ENCODE measurements at regions of chr19 and their contacts with region 1.

Region 1: GRCh38 chr19:34733826-34734600 is at the start of gene ZNF181:
- DNase-seq: peak; percentile 58 to 84 (median 82)
- ATAC-seq: peak; percentile 89
- H3K4me3 ChIP-seq: peak within 1 kb of the TSS; percentile 79
- H3K4me3 Mint-ChIP-seq: peak within 1 kb of the TSS; percentile 86 to 99 (median 98)
- H3K27ac ChIP-seq: peak within 1 kb of the TSS; percentile 94
- H3K27ac Mint-ChIP-seq: peak within 1 kb of the TSS; percentile 90 to 99 (median 98)
- H3K4me1 ChIP-seq: peaks cover 11 to 17% of the 10 kb centered on the region in 2 donors
- H3K4me1 Mint-ChIP-seq: peaks cover 18 to 39% (median 28%) of the 10 kb centered on the region in 7 donors
- H3K27me3 ChIP-seq: no peaks in the 10 kb centered on the region
- H3K27me3 Mint-ChIP-seq: peaks cover 0 to 4% (median 0%) of the 10 kb centered on the region in 5 donors
- total RNA-seq, gene ZNF181: 4.8 to 28.5 (median 8.4) TPM

Region 2: GRCh38 chr19:34677386-34678084 is 56.5 kb before region 1 on chr19 and contains the start of gene ZNF302:
- CTCF ChIA-PET with region 1: no interaction called
- POLR2A ChIA-PET with region 1: interaction called, 17 read pairs
- intact Hi-C with region 1: loop called (anchors 1 kb)
- DNase-seq: peak; percentile 87 to 96 (median 94)
- ATAC-seq: peak; percentile 95
- H3K4me3 ChIP-seq: peak within 1 kb of the TSS; percentile 93
- H3K4me3 Mint-ChIP-seq: peak within 1 kb of the TSS; percentile 92 to 99 (median 96)
- H3K27ac ChIP-seq: peak within 1 kb of the TSS; percentile 80
- H3K27ac Mint-ChIP-seq: peak within 1 kb of the TSS; percentile 94 to 100 (median 99)
- H3K4me1 ChIP-seq: peaks cover 14 to 15% of the 10 kb centered on the region in 2 donors
- H3K4me1 Mint-ChIP-seq: peaks cover 20 to 56% (median 35%) of the 10 kb centered on the region in 7 donors
- H3K27me3 ChIP-seq: no peaks in the 10 kb centered on the region
- H3K27me3 Mint-ChIP-seq: peaks cover 9 to 18% (median 12%) of the 10 kb centered on the region in 5 donors
- total RNA-seq, gene ZNF302: 13.6 to 61.4 (median 25.7) TPM

Region 3: DNA sequence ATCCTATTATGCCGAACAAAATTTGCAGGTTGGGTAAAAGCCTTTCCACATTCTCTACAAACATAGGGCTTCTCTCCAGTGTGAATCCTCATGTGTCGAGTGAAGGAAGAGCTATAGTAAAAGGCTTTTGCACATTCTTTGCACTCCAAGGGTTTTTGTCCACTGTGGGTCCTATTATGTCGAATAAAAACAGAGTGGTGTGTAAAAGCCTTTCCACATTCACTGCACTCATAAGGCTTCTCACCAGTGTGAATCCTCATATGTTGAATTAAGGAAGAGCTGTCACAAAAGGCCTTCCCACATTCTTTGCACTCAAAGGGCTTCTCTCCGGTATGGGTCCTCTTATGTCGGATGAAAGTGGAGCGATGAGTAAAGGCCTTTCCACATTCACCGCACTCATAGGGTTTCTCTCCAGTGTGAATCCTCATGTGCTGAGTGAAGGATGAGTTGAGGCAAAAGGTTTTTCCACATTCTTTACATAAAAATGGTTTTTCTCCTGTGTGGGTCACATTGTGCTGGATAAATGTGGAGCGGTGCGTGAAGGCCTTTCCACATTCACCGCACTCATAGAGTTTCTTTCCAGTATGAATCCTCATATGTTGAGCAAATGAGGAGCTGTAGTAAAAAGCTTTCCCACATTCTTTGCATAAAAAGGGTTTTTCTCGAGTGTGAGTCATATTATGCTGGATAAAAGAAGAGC is 25.4 kb after region 1 on chr19:
- CTCF ChIA-PET with region 1: no interaction called
- POLR2A ChIA-PET with region 1: no interaction called
- intact Hi-C with region 1: no loop called
- DNase-seq: no peak
- ATAC-seq: no peak
- H3K4me3 ChIP-seq: no peak overlapping the region
- H3K4me3 Mint-ChIP-seq: no peak overlapping the region
- H3K27ac ChIP-seq: no peak overlapping the region
- H3K27ac Mint-ChIP-seq: no peak overlapping the region
- H3K4me1 ChIP-seq: no peaks in the 10 kb centered on the region
- H3K4me1 Mint-ChIP-seq: no peaks in the 10 kb centered on the region
- H3K27me3 ChIP-seq: no peaks in the 10 kb centered on the region
- H3K27me3 Mint-ChIP-seq: no peaks in the 10 kb centered on the region

Region 4: DNA sequence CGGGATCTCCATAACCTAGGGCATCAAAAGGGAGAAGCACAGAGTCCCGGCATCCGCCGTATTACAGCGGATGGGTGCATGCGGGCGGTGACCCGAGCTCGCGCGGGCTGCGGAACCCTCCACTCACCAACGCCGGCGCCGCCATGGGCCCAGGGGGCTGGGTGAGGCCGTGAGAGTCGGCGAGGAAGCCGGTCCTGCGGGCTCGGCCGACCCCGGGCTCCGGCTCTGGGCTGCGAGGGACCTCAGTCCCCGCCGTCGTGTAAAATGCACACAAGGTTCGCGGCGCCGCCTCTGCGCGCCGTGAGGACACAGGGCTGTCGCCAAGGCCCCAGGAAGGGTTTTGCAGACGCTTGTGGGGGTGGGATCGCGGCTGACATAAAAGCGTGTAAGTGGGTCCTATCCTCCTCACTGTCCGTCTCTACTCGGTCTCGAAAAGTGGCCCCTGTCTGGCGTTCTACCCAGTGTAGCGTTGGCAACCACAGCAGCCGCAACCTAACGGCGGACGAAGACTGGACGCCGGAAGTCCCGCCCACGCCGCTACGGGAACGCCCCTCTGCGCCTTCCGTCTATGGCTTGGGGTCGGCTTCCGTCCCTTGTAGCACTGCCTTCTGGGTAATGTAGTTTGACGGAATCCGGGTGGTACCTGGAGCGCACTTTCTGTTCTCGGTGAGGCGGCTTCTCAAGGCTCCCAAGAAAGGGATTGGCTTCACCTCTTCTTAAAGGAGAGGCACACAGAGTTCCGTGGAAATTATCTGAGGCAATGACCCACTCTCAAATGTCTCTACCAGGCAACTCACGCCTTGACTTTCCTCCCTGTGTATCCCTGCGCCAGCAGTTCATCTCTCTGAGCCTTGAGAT is 38.9 kb after region 1 on chr19 and contains the start of gene ZNF599:
- CTCF ChIA-PET with region 1: no interaction called
- POLR2A ChIA-PET with region 1: interaction called, 7 read pairs
- intact Hi-C with region 1: loop called (anchors 1 kb)
- DNase-seq: peak; percentile 72 to 89 (median 87)
- ATAC-seq: peak; percentile 99
- H3K4me3 ChIP-seq: peak within 1 kb of the TSS; percentile 88
- H3K4me3 Mint-ChIP-seq: peak within 1 kb of the TSS; percentile 92 to 99 (median 96)
- H3K27ac ChIP-seq: peak within 1 kb of the TSS; percentile 81
- H3K27ac Mint-ChIP-seq: peak within 1 kb of the TSS; percentile 84 to 97 (median 95)
- H3K4me1 ChIP-seq: peaks cover 7 to 10% of the 10 kb centered on the region in 2 donors
- H3K4me1 Mint-ChIP-seq: peaks cover 13 to 21% (median 20%) of the 10 kb centered on the region in 7 donors
- H3K27me3 ChIP-seq: no peaks in the 10 kb centered on the region
- H3K27me3 Mint-ChIP-seq: peaks cover 0 to 15% (median 5%) of the 10 kb centered on the region in 5 donors
- total RNA-seq, gene ZNF599: 2.9 to 11.6 (median 5.3) TPM

Region 5: GRCh38 chr19:34867631-34868030 is 133.6 kb after region 1 on chr19:
- CTCF ChIA-PET with region 1: no interaction called
- POLR2A ChIA-PET with region 1: no interaction called
- intact Hi-C with region 1: loop called in 1 of 2 experiments (anchors 5 kb)
- DNase-seq: no peak
- ATAC-seq: no peak
- H3K4me3 ChIP-seq: no peak overlapping the region
- H3K4me3 Mint-ChIP-seq: no peak overlapping the region
- H3K27ac ChIP-seq: no peak overlapping the region
- H3K27ac Mint-ChIP-seq: no peak overlapping the region
- H3K4me1 ChIP-seq: no peaks in the 10 kb centered on the region
- H3K4me1 Mint-ChIP-seq: peaks cover 0 to 1% (median 0%) of the 10 kb centered on the region in 7 donors
- H3K27me3 ChIP-seq: no peaks in the 10 kb centered on the region
- H3K27me3 Mint-ChIP-seq: no peaks in the 10 kb centered on the region

Region 6: GRCh38 chr19:34926685-34927375 is 192.8 kb after region 1 on chr19 and contains the start of gene ZNF30:
- CTCF ChIA-PET with region 1: no interaction called
- POLR2A ChIA-PET with region 1: interaction called, 4 read pairs
- intact Hi-C with region 1: loop called in 1 of 2 experiments (anchors 1 kb)
- DNase-seq: peak; percentile 57 to 78 (median 74)
- ATAC-seq: peak; percentile 95
- H3K4me3 ChIP-seq: peak within 1 kb of the TSS; percentile 76
- H3K4me3 Mint-ChIP-seq: peak within 1 kb of the TSS; percentile 84 to 95 (median 92)
- H3K27ac ChIP-seq: peak within 1 kb of the TSS; percentile 61
- H3K27ac Mint-ChIP-seq: peak within 1 kb of the TSS; percentile 49 to 84 (median 72)
- H3K4me1 ChIP-seq: peaks cover 0 to 5% of the 10 kb centered on the region in 2 donors
- H3K4me1 Mint-ChIP-seq: peaks cover 10 to 34% (median 23%) of the 10 kb centered on the region in 7 donors
- H3K27me3 ChIP-seq: no peaks in the 10 kb centered on the region
- H3K27me3 Mint-ChIP-seq: peaks cover 0 to 6% (median 0%) of the 10 kb centered on the region in 5 donors
- total RNA-seq, gene ZNF30: 2.0 to 13.1 (median 3.5) TPM

Region 7: GRCh38 chr19:34999498-35000341 is 265.7 kb after region 1 on chr19 and contains the start of gene GRAMD1A:
- CTCF ChIA-PET with region 1: no interaction called
- POLR2A ChIA-PET with region 1: interaction called, 4 read pairs
- intact Hi-C with region 1: loop called in 1 of 2 experiments (anchors 10 kb)
- DNase-seq: peak; percentile 48 to 86 (median 63)
- ATAC-seq: peak; percentile 74
- H3K4me3 ChIP-seq: peak within 1 kb of the TSS; percentile 72
- H3K4me3 Mint-ChIP-seq: peak within 1 kb of the TSS; percentile 94 to 100 (median 98)
- H3K27ac ChIP-seq: peak within 1 kb of the TSS; percentile 97
- H3K27ac Mint-ChIP-seq: peak within 1 kb of the TSS; percentile 95 to 100 (median 98)
- H3K4me1 ChIP-seq: peaks cover 66 to 72% of the 10 kb centered on the region in 2 donors
- H3K4me1 Mint-ChIP-seq: peaks cover 58 to 81% (median 73%) of the 10 kb centered on the region in 7 donors
- H3K27me3 ChIP-seq: no peaks in the 10 kb centered on the region
- H3K27me3 Mint-ChIP-seq: no peaks in the 10 kb centered on the region
- total RNA-seq, gene GRAMD1A: 90.1 to 286 (median 253) TPM

Measured in naive thymus-derived CD4-positive, alpha-beta T cell (primary cell).